ENCODE measurements at regions of chr2 and their contacts with region 1.

Region 1: DNA sequence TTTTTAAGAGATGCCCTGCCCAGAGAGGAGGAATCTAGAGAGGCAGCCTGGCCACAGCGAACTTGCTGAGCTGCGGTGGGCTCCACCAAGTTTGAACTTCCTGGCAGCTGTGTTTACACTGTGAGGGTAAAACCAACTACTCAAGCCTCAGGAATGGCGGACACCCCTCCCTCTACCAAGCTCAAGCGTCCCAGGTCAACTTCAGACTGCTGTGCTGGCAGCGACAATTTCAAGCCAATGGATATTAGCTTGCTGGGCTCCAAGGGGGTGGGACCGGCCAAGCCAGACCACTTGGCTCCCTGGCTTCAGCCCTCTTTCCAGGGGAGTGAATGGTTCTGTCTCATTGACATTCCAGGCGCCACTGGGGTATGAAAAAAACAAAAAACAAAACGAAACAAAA is 289.4 kb downstream of the KCNS3 start:
- DNase-seq: no peak
- ATAC-seq: no peak
- H3K4me3 Mint-ChIP-seq: no peak overlapping the region
- H3K27ac Mint-ChIP-seq: no peak overlapping the region
- H3K4me1 Mint-ChIP-seq: no peaks in the 10 kb centered on the region
- H3K27me3 Mint-ChIP-seq: peaks cover 13% of the 10 kb centered on the region

Region 2: DNA sequence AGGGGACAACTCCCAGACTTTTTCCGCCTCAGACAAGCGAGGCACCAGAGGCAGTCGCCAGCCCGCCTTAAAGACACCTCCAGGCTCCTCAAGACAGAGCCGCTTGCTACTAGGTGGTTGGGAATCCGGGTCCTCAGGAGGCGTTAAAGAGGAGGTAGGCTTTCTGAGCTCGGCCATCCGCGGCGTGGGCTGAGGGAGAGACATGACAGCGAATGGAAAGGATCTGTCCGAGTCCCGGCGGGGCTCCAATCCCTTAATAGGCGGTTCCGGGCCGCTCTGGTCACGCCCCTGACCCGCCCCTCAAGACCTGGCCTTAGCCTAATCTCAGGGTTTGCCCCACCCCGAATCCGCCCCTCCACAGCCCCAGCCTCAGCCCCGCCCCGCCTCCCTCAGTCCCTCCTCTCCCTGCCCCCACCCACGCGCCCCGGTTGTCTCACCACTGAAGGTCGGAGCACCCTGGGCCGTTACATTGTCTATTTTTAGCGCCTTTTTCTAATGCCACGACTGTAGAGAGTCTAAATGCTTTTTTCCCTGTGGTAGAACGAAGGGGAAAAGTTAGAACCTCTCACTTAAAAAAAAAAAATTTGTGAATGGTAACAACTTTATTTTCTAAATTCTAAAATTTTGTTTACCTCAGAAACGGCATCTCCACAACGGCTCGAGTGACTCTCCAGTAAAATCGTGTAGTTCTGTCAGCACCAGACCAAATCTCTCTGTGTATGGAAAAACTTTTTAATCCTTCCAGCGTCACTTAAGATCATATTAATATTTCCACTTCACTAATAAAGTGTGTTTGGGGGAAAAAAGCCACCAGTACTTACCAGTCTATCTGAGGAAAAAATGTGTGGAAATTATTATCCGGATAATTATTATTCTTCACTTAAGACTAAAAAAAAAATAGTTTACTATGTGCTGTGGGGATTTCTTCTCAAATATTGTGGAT is 649.4 kb before region 1 on chr2 and contains the start of gene RAD51AP2:
- CTCF ChIA-PET with region 1: no interaction called
- POLR2A ChIA-PET with region 1: interaction called, 13 read pairs
- intact Hi-C with region 1: no loop called
- DNase-seq: peak; percentile 69
- ATAC-seq: peak; percentile 53
- H3K4me3 Mint-ChIP-seq: no peak within 1 kb of the TSS
- H3K27ac Mint-ChIP-seq: no peak within 1 kb of the TSS
- H3K4me1 Mint-ChIP-seq: no peaks in the 10 kb centered on the region
- H3K27me3 Mint-ChIP-seq: peaks cover 30% of the 10 kb centered on the region
- total RNA-seq, gene RAD51AP2: not detected

Region 3: DNA sequence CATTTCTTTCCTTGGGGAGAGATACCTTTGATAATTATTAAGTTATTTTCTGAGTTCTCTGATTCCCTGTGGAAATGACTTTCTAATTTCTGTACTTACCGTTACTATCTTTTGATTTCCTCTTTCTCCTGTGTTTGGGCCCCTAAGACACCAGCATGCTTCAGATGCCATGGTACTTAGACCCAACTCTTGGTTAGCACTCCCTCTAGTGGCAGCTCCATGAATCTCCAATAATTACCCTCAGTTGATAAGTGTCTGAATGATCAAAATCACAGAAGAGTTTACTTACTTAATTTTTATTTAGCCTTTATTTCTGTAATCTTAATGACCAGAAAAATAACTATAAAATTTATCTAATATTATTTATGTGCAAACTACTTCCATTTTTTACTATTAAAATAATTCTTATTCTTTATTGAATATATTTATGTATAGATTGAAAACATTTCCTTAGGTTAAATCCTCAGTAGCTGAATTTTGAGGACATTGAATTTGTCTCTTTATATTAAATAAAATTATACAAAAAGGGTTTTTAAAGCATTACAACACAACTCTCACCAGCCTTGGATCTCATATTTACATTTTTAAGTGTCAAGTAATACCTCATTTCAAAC is 11.0 kb after region 1 on chr2:
- CTCF ChIA-PET with region 1: interaction called, 10 read pairs
- POLR2A ChIA-PET with region 1: no interaction called
- intact Hi-C with region 1: no loop called
- DNase-seq: peak; percentile 52
- ATAC-seq: peak; percentile 55
- H3K4me3 Mint-ChIP-seq: no peak overlapping the region
- H3K27ac Mint-ChIP-seq: no peak overlapping the region
- H3K4me1 Mint-ChIP-seq: no peaks in the 10 kb centered on the region
- H3K27me3 Mint-ChIP-seq: peaks cover 6% of the 10 kb centered on the region